Heart right ventricle (tissue), 16 donors: ENCODE measurements at regions of chr19 and their contacts with region 1.

Region 1: DNA sequence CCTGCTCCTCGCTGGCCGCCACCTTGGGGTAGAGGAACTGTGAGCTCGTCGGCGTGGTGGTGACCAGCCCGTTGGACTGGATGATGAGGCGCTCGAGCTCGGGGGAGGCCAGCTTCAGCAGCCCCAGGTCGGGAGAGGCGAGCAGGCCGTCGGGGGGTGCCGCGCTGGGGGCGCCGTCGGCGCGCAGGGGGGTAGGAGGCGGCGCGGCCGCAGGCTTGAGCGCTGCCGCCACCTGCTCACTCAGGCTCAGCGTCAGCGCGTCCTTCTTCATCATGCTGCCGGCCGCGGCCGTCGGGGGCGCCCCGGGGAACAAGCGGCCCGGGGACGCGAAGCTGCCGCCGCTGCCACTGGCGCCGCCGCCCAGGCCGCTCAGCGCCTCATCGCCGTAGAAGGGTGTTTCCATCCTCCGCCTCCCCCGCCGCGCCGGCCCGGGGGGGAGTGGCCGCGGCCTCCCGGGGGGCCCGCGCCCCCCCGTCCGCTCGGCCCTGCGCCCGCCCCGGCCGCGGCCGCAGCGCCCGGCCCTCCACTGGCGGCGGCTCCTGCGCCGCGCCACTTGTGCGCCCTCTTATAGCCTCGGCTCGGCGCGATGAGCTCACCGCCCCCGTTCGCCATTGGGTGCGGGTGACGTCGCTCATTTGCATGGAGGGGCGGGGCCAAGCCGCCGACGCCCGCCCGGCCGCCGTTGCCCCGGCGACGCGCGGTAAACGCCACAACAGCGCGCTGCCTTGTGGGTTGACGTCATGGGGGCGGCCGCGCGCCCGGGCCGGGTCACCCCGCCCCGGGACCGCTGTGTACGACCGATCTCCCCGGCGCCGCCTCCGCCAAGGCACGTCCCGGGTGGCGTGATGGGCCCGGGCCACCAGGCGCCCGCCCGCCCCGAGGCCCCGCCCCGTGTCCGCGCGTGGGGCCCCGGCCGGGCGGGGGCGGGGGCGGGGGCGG is at the start of gene JUND:
- DNase-seq: peak; percentile 98 to 99
- ATAC-seq: peak; percentile 77 to 88 (median 82)
- H3K4me3 ChIP-seq: peak within 1 kb of the TSS; percentile 75 to 100 (median 94)
- H3K27ac ChIP-seq: peak within 1 kb of the TSS; percentile 99 to 100 (median 100)
- H3K4me1 ChIP-seq: peaks cover 9 to 56% (median 45%) of the 10 kb centered on the region in 9 donors
- H3K27me3 ChIP-seq: no peaks in the 10 kb centered on the region
- CTCF ChIP-seq: peak in 1 of 9 donors; percentile 9
- total RNA-seq, gene JUND: 93.7 to 195 (median 133) TPM

Region 2: GRCh38 chr19:18128044-18128443 is 153.3 kb before region 1 on chr19:
- intact Hi-C with region 1: no loop called
- DNase-seq: no peak
- ATAC-seq: no peak
- H3K4me3 ChIP-seq: no peak overlapping the region
- H3K27ac ChIP-seq: no peak overlapping the region
- H3K4me1 ChIP-seq: peaks cover 0 to 18% (median 0%) of the 10 kb centered on the region in 9 donors
- H3K27me3 ChIP-seq: no peaks in the 10 kb centered on the region
- CTCF ChIP-seq: no peak

Region 3: GRCh38 chr19:18304458-18305310 is 23.3 kb after region 1 on chr19:
- intact Hi-C with region 1: loop called in 4 of 10 experiments (anchors 1 to 2 kb)
- DNase-seq: peak; percentile 89
- ATAC-seq: peak; percentile 83 to 91 (median 87)
- H3K4me3 ChIP-seq: peak overlapping the region; percentile 6 to 59 (median 47)
- H3K27ac ChIP-seq: peak overlapping the region; percentile 90 to 100 (median 98)
- H3K4me1 ChIP-seq: peaks cover 24 to 74% (median 60%) of the 10 kb centered on the region in 9 donors
- H3K27me3 ChIP-seq: no peaks in the 10 kb centered on the region
- CTCF ChIP-seq: peak in 2 of 9 donors; percentile 26 to 28

Region 4: GRCh38 chr19:18328340-18329034 is 47.1 kb after region 1 on chr19:
- intact Hi-C with region 1: loop called (anchors 1 to 5 kb)
- DNase-seq: peak; percentile 80 to 96
- ATAC-seq: peak; percentile 89 to 99 (median 96)
- H3K4me3 ChIP-seq: peak overlapping the region in 9 of 10 donors; percentile 11 to 47 (median 35)
- H3K27ac ChIP-seq: peak overlapping the region in 9 of 10 donors; percentile 24 to 89 (median 75)
- H3K4me1 ChIP-seq: peaks cover 4 to 24% (median 22%) of the 10 kb centered on the region in 9 donors
- H3K27me3 ChIP-seq: no peaks in the 10 kb centered on the region
- CTCF ChIP-seq: peak; percentile 90 to 96 (median 92)

Region 5: GRCh38 chr19:18351544-18351943 is 70.2 kb after region 1 on chr19:
- intact Hi-C with region 1: no loop called
- DNase-seq: no peak
- ATAC-seq: no peak
- H3K4me3 ChIP-seq: no peak overlapping the region
- H3K27ac ChIP-seq: no peak overlapping the region
- H3K4me1 ChIP-seq: no peaks in the 10 kb centered on the region
- H3K27me3 ChIP-seq: no peaks in the 10 kb centered on the region
- CTCF ChIP-seq: no peak

Region 6: GRCh38 chr19:18401580-18402112 is 120.3 kb after region 1 on chr19:
- intact Hi-C with region 1: loop called in 2 of 10 experiments (anchors 5 to 10 kb)
- DNase-seq: peak; percentile 47 to 66
- ATAC-seq: peak; percentile 67 to 90 (median 83)
- H3K4me3 ChIP-seq: no peak overlapping the region
- H3K27ac ChIP-seq: peak overlapping the region in 3 of 10 donors; percentile 7 to 88 (median 26)
- H3K4me1 ChIP-seq: peaks cover 0 to 58% (median 0%) of the 10 kb centered on the region in 9 donors
- H3K27me3 ChIP-seq: peaks cover 0 to 15% (median 9%) of the 10 kb centered on the region in 7 donors
- CTCF ChIP-seq: peak in 7 of 9 donors; percentile 17 to 51 (median 38)

Region 7: DNA sequence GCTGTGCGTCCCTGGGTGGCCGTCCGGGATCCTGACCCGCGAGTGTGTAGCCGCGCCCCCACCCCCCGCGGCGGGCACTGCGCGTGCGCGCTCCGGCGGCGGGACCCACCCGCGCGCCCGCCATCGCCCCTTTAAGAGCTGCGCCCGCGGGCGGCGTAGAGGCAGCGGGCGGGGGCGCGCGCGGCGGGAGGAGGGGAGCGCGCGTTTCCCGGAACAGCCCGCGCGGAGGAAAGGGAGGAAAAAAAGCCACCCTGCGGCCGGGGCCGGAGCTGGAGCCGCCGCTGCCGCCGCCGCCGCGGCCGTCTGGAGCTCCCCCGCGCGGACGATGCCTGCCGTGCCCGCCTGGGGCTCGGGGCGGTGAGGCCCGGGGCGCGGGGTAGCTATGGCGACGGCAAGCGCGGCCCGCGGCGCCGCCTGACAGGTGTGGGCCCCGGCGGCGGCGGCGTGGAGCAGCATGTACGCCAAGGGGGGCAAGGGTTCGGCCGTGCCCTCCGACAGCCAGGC is 137.9 kb after region 1 on chr19 and contains the start of gene SSBP4:
- intact Hi-C with region 1: loop called in 5 of 10 experiments (anchors 2 to 10 kb)
- DNase-seq: peak; percentile 69 to 82
- ATAC-seq: peak in 6 of 8 donors; percentile 0 to 30 (median 7)
- H3K4me3 ChIP-seq: peak within 1 kb of the TSS; percentile 45 to 82 (median 76)
- H3K27ac ChIP-seq: peak within 1 kb of the TSS; percentile 78 to 99 (median 96)
- H3K4me1 ChIP-seq: peaks cover 33 to 93% (median 84%) of the 10 kb centered on the region in 9 donors
- H3K27me3 ChIP-seq: peaks cover 0 to 15% (median 0%) of the 10 kb centered on the region in 7 donors
- CTCF ChIP-seq: peak in 8 of 9 donors; percentile 5 to 66 (median 36)
- total RNA-seq, gene SSBP4: 17.6 to 47.1 (median 27.3) TPM